CD14-positive monocyte (primary cell): ENCODE measurements at regions of chr12 and their contacts with region 1.

Region 1: DNA sequence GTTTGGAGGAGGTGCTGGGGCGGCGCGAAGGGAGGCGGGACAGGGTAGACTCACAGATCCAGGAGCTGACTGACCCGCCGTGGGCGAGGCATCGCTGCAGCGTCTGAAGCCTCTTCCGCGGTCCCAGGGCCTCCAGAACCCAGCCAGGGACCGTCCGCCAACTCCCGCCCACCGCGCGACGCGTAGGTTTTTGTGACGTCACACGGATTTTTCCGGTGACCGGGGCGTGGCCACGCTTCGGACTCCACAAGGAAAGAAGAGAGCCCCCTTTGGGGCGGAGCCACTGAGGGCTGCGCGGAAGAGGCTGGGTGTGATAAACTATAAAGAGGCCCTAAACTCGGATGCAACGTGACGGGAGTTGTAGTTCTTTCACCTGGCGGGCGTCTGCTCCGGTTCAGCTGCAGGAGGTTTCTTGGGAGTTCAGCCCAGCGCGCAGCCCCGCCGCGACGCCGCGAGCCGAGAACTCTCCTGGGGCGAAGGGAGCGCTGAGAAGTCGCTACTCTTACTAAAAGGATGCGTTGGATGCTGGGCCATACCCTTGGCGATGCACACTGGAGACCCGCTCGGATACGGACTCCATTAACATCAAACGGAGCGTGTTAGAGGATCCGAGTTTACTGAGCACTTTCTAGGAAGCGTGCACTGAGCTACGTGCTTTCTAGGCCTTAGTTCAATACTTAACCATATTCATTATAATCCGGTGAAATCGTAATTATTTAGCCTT is at the start of gene AMN1:
- DNase-seq: peak; percentile 99 to 100 (median 99)
- H3K4me3 ChIP-seq: peak within 1 kb of the TSS; percentile 87 to 98 (median 95)
- H3K4me3 Mint-ChIP-seq: peak within 1 kb of the TSS; percentile 98 to 99
- H3K27ac ChIP-seq: peak within 1 kb of the TSS; percentile 97 to 100
- H3K27ac Mint-ChIP-seq: peak within 1 kb of the TSS; percentile 99 to 100 (median 99)
- H3K4me1 ChIP-seq: peaks cover 67 to 81% of the 10 kb centered on the region in 2 donors
- H3K4me1 Mint-ChIP-seq: peaks cover 69% of the 10 kb centered on the region
- H3K27me3 ChIP-seq: no peaks in the 10 kb centered on the region
- H3K27me3 Mint-ChIP-seq: peaks cover 0 to 5% (median 0%) of the 10 kb centered on the region in 3 donors
- CTCF ChIP-seq: no peak
- polyA plus RNA-seq, gene AMN1: 6.0 to 7.8 (median 7.4) TPM

Region 2: DNA sequence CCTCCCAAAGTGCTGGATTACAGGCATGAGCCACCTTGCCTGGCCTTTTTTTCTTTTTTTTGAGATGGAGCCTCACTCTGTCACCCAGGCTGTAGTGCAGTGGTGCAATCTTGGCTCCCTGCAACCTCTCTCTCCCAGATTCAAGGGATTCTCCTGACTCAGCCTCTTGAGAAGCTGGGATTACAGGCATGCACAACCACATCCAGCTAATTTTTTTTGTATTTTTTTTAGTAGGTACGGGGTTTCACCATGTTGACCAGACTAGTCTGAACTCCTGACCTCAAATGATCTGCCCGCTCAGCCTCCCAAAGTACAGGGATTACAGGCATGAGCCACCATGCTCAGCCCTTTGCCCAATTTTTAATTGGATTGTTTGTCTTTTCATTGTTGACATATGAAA is 461.1 kb before region 1 on chr12:
- intact Hi-C with region 1: no loop called
- DNase-seq: no peak
- H3K4me3 ChIP-seq: no peak overlapping the region
- H3K4me3 Mint-ChIP-seq: no peak overlapping the region
- H3K27ac ChIP-seq: no peak overlapping the region
- H3K27ac Mint-ChIP-seq: peak overlapping the region in 1 of 7 donors; percentile 23
- H3K4me1 ChIP-seq: no peaks in the 10 kb centered on the region
- H3K4me1 Mint-ChIP-seq: no peaks in the 10 kb centered on the region
- H3K27me3 ChIP-seq: no peaks in the 10 kb centered on the region
- H3K27me3 Mint-ChIP-seq: peaks cover 0 to 2% (median 1%) of the 10 kb centered on the region in 3 donors
- CTCF ChIP-seq: no peak

Region 3: GRCh38 chr12:31682136-31682962 is 46.7 kb before region 1 on chr12:
- intact Hi-C with region 1: loop called in 1 of 2 experiments (anchors 5 kb)
- DNase-seq: peak; percentile 76 to 88 (median 84)
- H3K4me3 ChIP-seq: no peak overlapping the region
- H3K4me3 Mint-ChIP-seq: no peak overlapping the region
- H3K27ac ChIP-seq: no peak overlapping the region
- H3K27ac Mint-ChIP-seq: peak overlapping the region in 6 of 7 donors; percentile 17 to 91 (median 80)
- H3K4me1 ChIP-seq: peaks cover 18 to 21% of the 10 kb centered on the region in 2 donors
- H3K4me1 Mint-ChIP-seq: peaks cover 18% of the 10 kb centered on the region
- H3K27me3 ChIP-seq: no peaks in the 10 kb centered on the region
- H3K27me3 Mint-ChIP-seq: peaks cover 0 to 1% (median 0%) of the 10 kb centered on the region in 3 donors
- CTCF ChIP-seq: peak; percentile 81

Region 4: DNA sequence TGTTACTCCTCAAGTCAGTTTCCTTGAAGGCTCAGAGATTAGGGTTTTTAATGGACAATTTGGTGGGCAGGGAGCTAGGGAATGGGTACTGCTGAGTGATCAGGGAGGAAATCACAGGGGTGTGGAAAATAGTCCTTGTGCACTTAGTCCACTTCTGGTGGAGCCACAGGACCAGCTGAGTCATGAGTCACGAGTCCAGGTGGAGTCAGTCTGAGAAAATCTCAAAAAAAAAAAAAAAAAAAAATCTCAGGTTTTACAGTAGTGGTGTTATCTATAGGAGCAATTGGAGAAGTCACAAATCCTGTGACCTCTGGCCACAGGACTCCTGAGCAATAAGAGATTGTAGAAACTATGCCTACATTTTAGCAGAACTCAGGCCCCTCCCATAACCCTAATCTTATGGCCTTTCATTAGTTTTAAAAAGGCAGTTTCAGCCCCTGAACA is 27.9 kb after region 1 on chr12:
- intact Hi-C with region 1: no loop called
- DNase-seq: peak; percentile 21 to 62 (median 47)
- H3K4me3 ChIP-seq: no peak overlapping the region
- H3K4me3 Mint-ChIP-seq: no peak overlapping the region
- H3K27ac ChIP-seq: no peak overlapping the region
- H3K27ac Mint-ChIP-seq: peak overlapping the region in 3 of 7 donors; percentile 58 to 77 (median 66)
- H3K4me1 ChIP-seq: peaks cover 11 to 28% of the 10 kb centered on the region in 2 donors
- H3K4me1 Mint-ChIP-seq: peaks cover 24% of the 10 kb centered on the region
- H3K27me3 ChIP-seq: no peaks in the 10 kb centered on the region
- H3K27me3 Mint-ChIP-seq: no peaks in the 10 kb centered on the region
- CTCF ChIP-seq: no peak

Region 5: DNA sequence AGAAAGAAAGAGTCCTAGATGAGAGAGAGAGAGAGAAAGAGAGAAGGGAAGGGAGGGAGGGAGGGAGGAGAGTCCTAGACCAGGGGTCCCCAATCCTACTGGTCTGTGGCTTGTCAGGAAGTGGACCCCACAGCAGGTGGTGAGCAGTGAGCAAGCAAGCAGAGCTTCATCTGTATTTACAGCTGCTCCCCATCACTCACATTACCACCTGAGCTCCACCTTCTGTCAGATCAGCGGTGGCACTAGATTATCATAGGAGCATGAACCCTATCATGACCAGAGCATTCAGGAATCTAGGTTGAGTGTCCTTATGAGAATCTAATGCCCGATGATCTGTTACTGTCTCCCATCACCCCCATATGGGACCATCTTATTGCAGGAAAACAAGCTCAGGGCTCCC is 39.0 kb after region 1 on chr12:
- intact Hi-C with region 1: loop called in 1 of 2 experiments (anchors 5 kb)
- DNase-seq: no peak
- H3K4me3 ChIP-seq: no peak overlapping the region
- H3K4me3 Mint-ChIP-seq: no peak overlapping the region
- H3K27ac ChIP-seq: no peak overlapping the region
- H3K27ac Mint-ChIP-seq: peak overlapping the region in 2 of 7 donors; percentile 7 to 58
- H3K4me1 ChIP-seq: peaks cover 0 to 7% of the 10 kb centered on the region in 2 donors
- H3K4me1 Mint-ChIP-seq: peaks cover 21% of the 10 kb centered on the region
- H3K27me3 ChIP-seq: no peaks in the 10 kb centered on the region
- H3K27me3 Mint-ChIP-seq: peaks cover 0 to 2% (median 0%) of the 10 kb centered on the region in 3 donors
- CTCF ChIP-seq: no peak

Region 6: GRCh38 chr12:31819427-31819826 is 90.3 kb after region 1 on chr12:
- intact Hi-C with region 1: no loop called
- DNase-seq: no peak
- H3K4me3 ChIP-seq: no peak overlapping the region
- H3K4me3 Mint-ChIP-seq: no peak overlapping the region
- H3K27ac ChIP-seq: no peak overlapping the region
- H3K27ac Mint-ChIP-seq: no peak overlapping the region
- H3K4me1 ChIP-seq: peaks cover 0 to 4% of the 10 kb centered on the region in 2 donors
- H3K4me1 Mint-ChIP-seq: peaks cover 3% of the 10 kb centered on the region
- H3K27me3 ChIP-seq: no peaks in the 10 kb centered on the region
- H3K27me3 Mint-ChIP-seq: no peaks in the 10 kb centered on the region
- CTCF ChIP-seq: no peak

Region 7: GRCh38 chr12:31832740-31833729 is 104.0 kb after region 1 on chr12:
- intact Hi-C with region 1: loop called in 1 of 2 experiments (anchors 5 kb)
- DNase-seq: peak; percentile 88 to 97 (median 88)
- H3K4me3 ChIP-seq: peak overlapping the region in 1 of 3 experiments; percentile 34
- H3K4me3 Mint-ChIP-seq: peak overlapping the region; percentile 45 to 60
- H3K27ac ChIP-seq: peak overlapping the region; percentile 82 to 98
- H3K27ac Mint-ChIP-seq: peak overlapping the region; percentile 94 to 99 (median 97)
- H3K4me1 ChIP-seq: peaks cover 40 to 43% of the 10 kb centered on the region in 2 donors
- H3K4me1 Mint-ChIP-seq: peaks cover 29% of the 10 kb centered on the region
- H3K27me3 ChIP-seq: no peaks in the 10 kb centered on the region
- H3K27me3 Mint-ChIP-seq: peaks cover 0 to 2% (median 0%) of the 10 kb centered on the region in 3 donors
- CTCF ChIP-seq: no peak